Mammary epithelial cell (primary cell): ENCODE measurements at regions of chr18 and their contacts with region 1.

Region 1: GRCh38 chr18:2706903-2707302 is 51.4 kb downstream of the SMCHD1 start:
- DNase-seq: no peak
- H3K4me3 ChIP-seq: no peak overlapping the region
- H3K27ac ChIP-seq: no peak overlapping the region
- H3K4me1 ChIP-seq: no peaks in the 10 kb centered on the region
- H3K27me3 ChIP-seq: no peaks in the 10 kb centered on the region
- CTCF ChIP-seq: no peak

Region 2: GRCh38 chr18:2641638-2642037 is 65.3 kb before region 1 on chr18:
- CTCF ChIA-PET with region 1: no interaction called
- dilution Hi-C with region 1: no loop called
- in situ Hi-C with region 1: loop called in 1 of 2 experiments (anchors 10 kb)
- intact Hi-C with region 1: no loop called
- DNase-seq: no peak
- H3K4me3 ChIP-seq: no peak overlapping the region
- H3K27ac ChIP-seq: no peak overlapping the region
- H3K4me1 ChIP-seq: no peaks in the 10 kb centered on the region
- H3K27me3 ChIP-seq: no peaks in the 10 kb centered on the region
- CTCF ChIP-seq: no peak

Region 3: DNA sequence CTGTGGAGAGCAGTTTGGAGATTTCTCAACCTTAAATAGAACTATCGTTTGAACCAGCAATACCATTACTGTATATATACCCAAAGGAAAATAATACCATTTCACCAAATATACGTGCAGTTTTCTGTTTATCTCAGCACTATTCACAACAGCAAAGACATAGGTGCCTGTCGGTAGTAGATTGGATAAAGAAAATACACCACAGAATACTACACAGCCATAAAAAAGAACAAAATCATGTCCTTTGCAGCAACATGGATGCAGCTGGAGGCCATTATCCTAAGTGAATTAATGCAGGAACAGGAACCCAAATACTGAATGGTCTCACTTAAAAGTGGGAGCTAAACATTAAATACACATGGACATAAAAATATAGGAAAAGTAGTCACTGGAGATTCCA is 29.9 kb after region 1 on chr18:
- CTCF ChIA-PET with region 1: no interaction called
- dilution Hi-C with region 1: loop called (anchors 5 kb)
- in situ Hi-C with region 1: no loop called
- intact Hi-C with region 1: no loop called
- DNase-seq: no peak
- H3K4me3 ChIP-seq: no peak overlapping the region
- H3K27ac ChIP-seq: no peak overlapping the region
- H3K4me1 ChIP-seq: no peaks in the 10 kb centered on the region
- H3K27me3 ChIP-seq: no peaks in the 10 kb centered on the region
- CTCF ChIP-seq: no peak